ENCODE measurements at regions of chr1 and their contacts with region 1.

Region 1: GRCh38 chr1:199684686-199685273 is 342.7 kb upstream of the NR5A2 start:
- DNase-seq: peak in 4 of 14 experiments; percentile 11 to 60 (median 46)
- ATAC-seq: peak; percentile 74
- H3K4me3 ChIP-seq: no peak overlapping the region
- H3K4me3 Mint-ChIP-seq: no peak overlapping the region
- H3K27ac ChIP-seq: no peak overlapping the region
- H3K27ac Mint-ChIP-seq: no peak overlapping the region
- H3K4me1 ChIP-seq: no peaks in the 10 kb centered on the region
- H3K4me1 Mint-ChIP-seq: no peaks in the 10 kb centered on the region
- H3K27me3 ChIP-seq: no peaks in the 10 kb centered on the region
- H3K27me3 Mint-ChIP-seq: peaks cover 8% of the 10 kb centered on the region
- CTCF ChIP-seq: peak; percentile 72

Region 2: GRCh38 chr1:199733125-199733524 is 48.3 kb after region 1 on chr1:
- CTCF ChIA-PET with region 1: no interaction called
- POLR2A ChIA-PET with region 1: no interaction called
- intact Hi-C with region 1: no loop called
- DNase-seq: no peak
- ATAC-seq: no peak
- H3K4me3 ChIP-seq: no peak overlapping the region
- H3K4me3 Mint-ChIP-seq: no peak overlapping the region
- H3K27ac ChIP-seq: no peak overlapping the region
- H3K27ac Mint-ChIP-seq: no peak overlapping the region
- H3K4me1 ChIP-seq: no peaks in the 10 kb centered on the region
- H3K4me1 Mint-ChIP-seq: no peaks in the 10 kb centered on the region
- H3K27me3 ChIP-seq: peaks cover 0 to 3% of the 10 kb centered on the region in 2 experiments
- H3K27me3 Mint-ChIP-seq: peaks cover 8% of the 10 kb centered on the region
- CTCF ChIP-seq: no peak

Region 3: GRCh38 chr1:200302192-200302920 is 617.6 kb after region 1 on chr1:
- CTCF ChIA-PET with region 1: no interaction called
- POLR2A ChIA-PET with region 1: no interaction called
- intact Hi-C with region 1: loop called in 1 of 2 experiments (anchors 2 kb)
- DNase-seq: peak; percentile 41 to 86 (median 63)
- ATAC-seq: peak; percentile 96
- H3K4me3 ChIP-seq: peak overlapping the region; percentile 69
- H3K4me3 Mint-ChIP-seq: peak overlapping the region; percentile 97
- H3K27ac ChIP-seq: peak overlapping the region; percentile 52 to 54
- H3K27ac Mint-ChIP-seq: peak overlapping the region; percentile 92
- H3K4me1 ChIP-seq: peaks cover 16% of the 10 kb centered on the region
- H3K4me1 Mint-ChIP-seq: peaks cover 30% of the 10 kb centered on the region
- H3K27me3 ChIP-seq: no peaks in the 10 kb centered on the region
- H3K27me3 Mint-ChIP-seq: no peaks in the 10 kb centered on the region
- CTCF ChIP-seq: no peak

Region 4: DNA sequence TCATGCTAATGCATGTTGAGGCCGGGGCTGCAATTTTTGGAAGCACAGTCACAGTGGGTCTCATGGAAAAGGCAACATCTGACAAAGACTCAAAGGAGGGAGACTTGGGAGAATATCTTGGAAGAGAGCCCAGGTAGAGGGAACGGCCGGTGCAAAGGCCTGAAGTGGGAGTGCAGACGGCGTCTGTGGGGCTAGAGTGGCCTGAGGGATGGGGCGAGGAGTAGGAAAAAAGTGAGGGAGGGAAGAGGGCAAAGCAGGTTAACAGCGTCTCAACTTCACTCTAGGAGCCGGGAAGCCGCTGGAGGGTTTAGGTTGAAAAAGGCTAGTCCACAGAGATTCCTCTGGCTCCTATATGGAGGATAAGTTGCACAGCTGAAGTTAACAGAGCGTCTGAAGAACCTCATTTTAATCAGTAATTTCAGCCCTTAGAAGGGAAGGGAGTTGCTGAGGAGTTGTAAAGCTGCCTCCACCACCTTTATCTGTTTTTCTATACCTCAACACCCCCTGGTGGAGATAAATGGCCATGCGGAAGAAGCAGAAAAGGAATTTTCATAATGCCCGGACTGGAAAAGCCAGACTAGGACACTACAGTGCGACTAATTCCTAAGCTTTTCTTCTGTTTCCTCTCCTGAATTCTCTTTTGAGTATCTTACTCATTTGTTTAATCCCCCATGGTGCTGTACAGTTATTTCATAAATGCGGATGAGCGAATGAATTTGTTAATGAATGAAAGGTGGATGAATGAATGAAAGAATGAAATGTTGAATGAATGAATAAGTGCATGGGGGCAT is 803.8 kb after region 1 on chr1:
- CTCF ChIA-PET with region 1: no interaction called
- POLR2A ChIA-PET with region 1: no interaction called
- intact Hi-C with region 1: loop called (anchors 1 to 5 kb)
- DNase-seq: peak in 12 of 14 experiments; percentile 9 to 69 (median 28)
- ATAC-seq: peak; percentile 52
- H3K4me3 ChIP-seq: no peak overlapping the region
- H3K4me3 Mint-ChIP-seq: no peak overlapping the region
- H3K27ac ChIP-seq: no peak overlapping the region
- H3K27ac Mint-ChIP-seq: no peak overlapping the region
- H3K4me1 ChIP-seq: peaks cover 10% of the 10 kb centered on the region
- H3K4me1 Mint-ChIP-seq: no peaks in the 10 kb centered on the region
- H3K27me3 ChIP-seq: no peaks in the 10 kb centered on the region
- H3K27me3 Mint-ChIP-seq: no peaks in the 10 kb centered on the region
- CTCF ChIP-seq: peak; percentile 79

Region 5: DNA sequence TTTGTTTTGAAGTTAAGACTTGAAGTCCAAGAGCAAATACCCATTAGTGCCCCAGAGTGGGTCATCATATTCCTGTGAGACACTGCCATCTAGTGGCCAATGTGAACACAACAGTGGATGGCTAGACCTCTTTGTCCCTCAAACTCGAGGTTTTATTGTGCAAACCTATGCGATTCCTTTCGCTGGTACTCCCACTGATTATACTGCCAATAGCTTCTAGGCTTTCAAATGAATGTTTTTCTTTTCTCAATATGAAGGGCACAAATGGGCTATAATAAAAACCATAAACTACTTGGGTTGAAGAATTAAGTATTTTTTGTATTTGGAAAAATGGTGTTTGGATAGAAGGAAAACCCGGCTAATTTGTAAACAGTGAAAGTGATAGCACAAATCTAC is 825.4 kb after region 1 on chr1:
- CTCF ChIA-PET with region 1: interaction called, 6 read pairs
- POLR2A ChIA-PET with region 1: no interaction called
- intact Hi-C with region 1: loop called (anchors 1 to 2 kb)
- DNase-seq: peak; percentile 26 to 82 (median 52)
- ATAC-seq: peak; percentile 79
- H3K4me3 ChIP-seq: no peak overlapping the region
- H3K4me3 Mint-ChIP-seq: no peak overlapping the region
- H3K27ac ChIP-seq: no peak overlapping the region
- H3K27ac Mint-ChIP-seq: no peak overlapping the region
- H3K4me1 ChIP-seq: no peaks in the 10 kb centered on the region
- H3K4me1 Mint-ChIP-seq: no peaks in the 10 kb centered on the region
- H3K27me3 ChIP-seq: no peaks in the 10 kb centered on the region
- H3K27me3 Mint-ChIP-seq: peaks cover 4% of the 10 kb centered on the region
- CTCF ChIP-seq: peak; percentile 99

Region 6: DNA sequence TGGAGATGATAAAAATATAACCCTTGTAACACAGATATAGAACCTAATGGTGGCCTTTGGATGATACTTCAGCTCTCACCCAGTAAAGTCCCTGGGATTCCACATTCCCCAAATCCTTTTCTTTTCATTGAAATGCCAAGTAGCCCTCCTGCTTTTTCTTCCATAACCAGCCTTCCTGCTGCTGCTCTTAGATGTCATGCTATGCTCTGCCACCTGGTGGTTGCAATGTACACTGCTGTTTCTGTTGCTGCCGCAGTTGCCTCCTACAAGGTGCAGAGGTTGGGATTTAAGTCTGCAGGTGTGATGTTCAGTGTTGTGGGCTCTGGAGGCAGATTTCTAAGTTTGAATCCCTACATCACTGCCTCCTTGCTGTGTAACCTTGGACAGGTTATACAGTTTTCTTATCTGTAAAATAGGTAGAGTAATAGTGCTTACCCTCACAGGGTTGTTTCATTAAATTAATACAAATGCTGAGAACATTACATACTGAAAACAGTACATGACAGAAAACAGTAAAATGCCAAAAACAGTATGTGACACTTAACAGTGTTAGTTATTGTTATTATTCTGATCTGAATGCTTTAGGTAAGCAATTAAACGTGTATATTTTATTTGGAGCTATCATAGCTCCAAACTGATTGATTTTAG is 1118.2 kb after region 1 on chr1:
- CTCF ChIA-PET with region 1: no interaction called
- POLR2A ChIA-PET with region 1: no interaction called
- intact Hi-C with region 1: loop called in 1 of 2 experiments (anchors 10 kb)
- DNase-seq: peak; percentile 55 to 87 (median 67)
- ATAC-seq: peak; percentile 95
- H3K4me3 ChIP-seq: no peak overlapping the region
- H3K4me3 Mint-ChIP-seq: no peak overlapping the region
- H3K27ac ChIP-seq: no peak overlapping the region
- H3K27ac Mint-ChIP-seq: no peak overlapping the region
- H3K4me1 ChIP-seq: no peaks in the 10 kb centered on the region
- H3K4me1 Mint-ChIP-seq: peaks cover 6% of the 10 kb centered on the region
- H3K27me3 ChIP-seq: no peaks in the 10 kb centered on the region
- H3K27me3 Mint-ChIP-seq: no peaks in the 10 kb centered on the region
- CTCF ChIP-seq: peak; percentile 93